ENCODE measurements at regions of chr15 and their contacts with region 1.

Region 1: GRCh38 chr15:50145451-50145872 is 26.4 kb upstream of the ATP8B4 start:
- DNase-seq: peak; percentile 73
- H3K4me3 ChIP-seq: no peak overlapping the region
- H3K27ac ChIP-seq: no peak overlapping the region
- H3K4me1 ChIP-seq: peaks cover 2% of the 10 kb centered on the region
- H3K27me3 ChIP-seq: no peaks in the 10 kb centered on the region
- CTCF ChIP-seq: peak; percentile 16 to 25
- POLR2A ChIP-seq: no peak

Region 2: DNA sequence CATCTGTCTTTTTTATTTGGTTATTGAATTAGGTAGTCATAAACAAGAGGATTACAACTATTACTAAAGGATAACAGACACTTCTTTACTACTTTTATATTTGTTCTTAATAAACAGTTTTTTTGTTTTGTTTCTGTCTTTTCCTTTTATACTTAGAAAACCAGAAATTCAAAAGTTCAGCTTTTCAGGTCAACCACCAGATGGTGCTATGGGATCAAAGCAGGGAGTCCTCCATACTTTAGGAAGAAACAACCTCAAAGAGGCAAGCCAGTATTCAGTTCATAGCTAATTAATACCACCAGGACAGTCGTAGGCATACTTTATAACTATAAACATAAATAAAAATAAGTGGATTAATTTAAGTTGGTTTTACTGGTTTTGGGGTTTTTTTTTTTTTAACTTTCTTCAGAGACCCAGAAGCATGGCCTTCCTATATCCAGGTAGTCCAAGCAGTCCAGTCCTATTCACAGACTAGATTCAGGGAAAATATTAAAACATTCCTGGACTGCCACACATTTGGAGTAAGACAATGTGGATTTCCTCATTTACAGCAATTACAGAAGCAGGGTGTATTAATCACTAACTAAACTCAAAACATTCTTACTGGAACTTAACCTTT is 1283.5 kb before region 1 on chr15:
- CTCF ChIA-PET with region 1: interaction called, 69 read pairs
- POLR2A ChIA-PET with region 1: no interaction called
- dilution Hi-C with region 1: no loop called
- intact Hi-C with region 1: loop called (anchors 1 kb)
- DNase-seq: peak; percentile 58
- H3K4me3 ChIP-seq: no peak overlapping the region
- H3K27ac ChIP-seq: no peak overlapping the region
- H3K4me1 ChIP-seq: no peaks in the 10 kb centered on the region
- H3K27me3 ChIP-seq: no peaks in the 10 kb centered on the region
- CTCF ChIP-seq: peak; percentile 51 to 57
- POLR2A ChIP-seq: no peak

Region 3: GRCh38 chr15:49235446-49236124 is 909.9 kb before region 1 on chr15:
- CTCF ChIA-PET with region 1: interaction called, 79 read pairs
- POLR2A ChIA-PET with region 1: no interaction called
- dilution Hi-C with region 1: no loop called
- intact Hi-C with region 1: loop called (anchors 1 kb)
- DNase-seq: peak; percentile 92
- H3K4me3 ChIP-seq: no peak overlapping the region
- H3K27ac ChIP-seq: no peak overlapping the region
- H3K4me1 ChIP-seq: peaks cover 7% of the 10 kb centered on the region
- H3K27me3 ChIP-seq: no peaks in the 10 kb centered on the region
- CTCF ChIP-seq: peak; percentile 63 to 67
- POLR2A ChIP-seq: no peak

Region 4: GRCh38 chr15:49471733-49472132 is 673.7 kb before region 1 on chr15:
- CTCF ChIA-PET with region 1: interaction called, 11 read pairs
- POLR2A ChIA-PET with region 1: no interaction called
- dilution Hi-C with region 1: no loop called
- intact Hi-C with region 1: loop called (anchors 5 kb)
- DNase-seq: no peak
- H3K4me3 ChIP-seq: no peak overlapping the region
- H3K27ac ChIP-seq: no peak overlapping the region
- H3K4me1 ChIP-seq: no peaks in the 10 kb centered on the region
- H3K27me3 ChIP-seq: peaks cover 0 to 2% of the 10 kb centered on the region in 2 experiments
- CTCF ChIP-seq: no peak
- POLR2A ChIP-seq: no peak

Region 5: DNA sequence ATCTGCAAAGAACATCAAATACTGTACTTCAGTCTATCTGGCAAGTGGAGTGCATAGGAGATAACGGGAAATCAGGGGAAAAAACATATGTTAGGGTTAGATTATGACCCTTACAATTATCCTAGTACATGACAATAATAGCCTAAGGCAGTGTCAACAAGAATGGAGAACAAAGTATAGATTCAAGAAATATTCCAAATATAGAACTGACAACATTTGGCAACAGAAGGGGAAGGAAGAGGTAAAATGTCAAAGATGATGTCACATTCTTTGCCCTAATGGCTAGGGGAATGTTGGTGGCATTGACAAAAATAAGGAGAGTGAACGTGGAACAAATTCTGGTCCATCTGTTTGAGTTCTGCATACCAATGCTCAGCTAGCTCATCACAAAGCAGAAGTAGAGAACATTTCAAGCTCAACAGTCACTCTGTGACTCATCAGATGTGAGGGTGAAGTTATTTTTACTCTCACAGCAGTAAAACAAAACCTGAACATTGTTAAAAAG is 10.9 kb before region 1 on chr15:
- CTCF ChIA-PET with region 1: interaction called, 37 read pairs
- POLR2A ChIA-PET with region 1: no interaction called
- dilution Hi-C with region 1: no loop called
- intact Hi-C with region 1: no loop called
- DNase-seq: peak; percentile 7
- H3K4me3 ChIP-seq: no peak overlapping the region
- H3K27ac ChIP-seq: no peak overlapping the region
- H3K4me1 ChIP-seq: peaks cover 7% of the 10 kb centered on the region
- H3K27me3 ChIP-seq: peaks cover 0 to 1% of the 10 kb centered on the region in 2 experiments
- CTCF ChIP-seq: no peak
- POLR2A ChIP-seq: no peak

Region 6: GRCh38 chr15:50234771-50235170 is 89.3 kb after region 1 on chr15:
- CTCF ChIA-PET with region 1: no interaction called
- POLR2A ChIA-PET with region 1: no interaction called
- dilution Hi-C with region 1: no loop called
- intact Hi-C with region 1: no loop called
- DNase-seq: no peak
- H3K4me3 ChIP-seq: no peak overlapping the region
- H3K27ac ChIP-seq: no peak overlapping the region
- H3K4me1 ChIP-seq: no peaks in the 10 kb centered on the region
- H3K27me3 ChIP-seq: no peaks in the 10 kb centered on the region
- CTCF ChIP-seq: no peak
- POLR2A ChIP-seq: no peak

Region 7: DNA sequence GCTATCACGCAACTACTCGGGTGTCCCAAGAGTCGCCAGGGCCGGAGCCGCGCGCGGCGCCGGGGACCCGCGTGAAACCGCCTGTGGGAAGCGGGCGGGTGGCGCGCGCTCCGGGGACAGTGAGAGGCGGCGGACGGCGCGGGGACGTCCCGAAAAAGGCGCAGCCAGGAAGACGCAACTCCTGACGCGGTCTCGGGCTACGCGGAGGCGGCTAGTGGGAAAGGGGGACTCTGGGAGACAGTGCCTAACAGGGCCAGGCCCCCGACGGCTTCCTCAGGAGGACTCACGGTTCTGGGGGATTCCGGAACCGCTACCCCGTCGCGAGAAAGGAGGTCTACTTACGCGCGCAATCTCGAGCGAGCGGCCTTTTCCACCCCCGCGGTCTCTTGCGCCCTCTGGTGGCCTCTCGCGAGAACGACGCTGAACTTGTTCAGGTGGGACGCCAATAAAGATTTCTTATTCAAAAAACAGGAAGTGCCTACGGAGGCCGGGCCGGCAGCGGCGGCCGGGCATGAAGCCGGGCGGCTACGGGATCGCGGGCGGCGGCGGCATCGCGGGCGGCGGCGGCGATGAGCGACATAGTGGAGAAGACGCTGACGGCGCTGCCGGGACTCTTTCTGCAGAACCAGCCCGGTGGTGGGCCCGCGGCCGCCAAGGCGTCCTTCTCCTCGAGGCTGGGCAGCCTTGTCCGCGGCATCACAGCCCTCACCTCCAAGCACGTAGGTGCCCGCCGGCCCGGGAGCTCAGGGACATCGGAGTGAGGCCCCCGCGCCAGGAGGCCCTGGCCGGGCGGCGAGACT is 762.9 kb after region 1 on chr15 and contains the start of gene AP4E1:
- CTCF ChIA-PET with region 1: interaction called, 3 read pairs
- POLR2A ChIA-PET with region 1: no interaction called
- dilution Hi-C with region 1: no loop called
- intact Hi-C with region 1: loop called (anchors 5 kb)
- DNase-seq: peak; percentile 96
- H3K4me3 ChIP-seq: peak within 1 kb of the TSS; percentile 95 to 99 (median 96)
- H3K27ac ChIP-seq: peak within 1 kb of the TSS; percentile 76
- H3K4me1 ChIP-seq: peaks cover 10% of the 10 kb centered on the region
- H3K27me3 ChIP-seq: no peaks in the 10 kb centered on the region
- CTCF ChIP-seq: peak; percentile 87 to 90
- POLR2A ChIP-seq: peak; percentile 14
- total RNA-seq, gene AP4E1: 9.8 and 10.1 TPM in 2 replicates